Heart right ventricle (tissue), 16 donors: ENCODE measurements at regions of chr18 and their contacts with region 1.

Region 1: DNA sequence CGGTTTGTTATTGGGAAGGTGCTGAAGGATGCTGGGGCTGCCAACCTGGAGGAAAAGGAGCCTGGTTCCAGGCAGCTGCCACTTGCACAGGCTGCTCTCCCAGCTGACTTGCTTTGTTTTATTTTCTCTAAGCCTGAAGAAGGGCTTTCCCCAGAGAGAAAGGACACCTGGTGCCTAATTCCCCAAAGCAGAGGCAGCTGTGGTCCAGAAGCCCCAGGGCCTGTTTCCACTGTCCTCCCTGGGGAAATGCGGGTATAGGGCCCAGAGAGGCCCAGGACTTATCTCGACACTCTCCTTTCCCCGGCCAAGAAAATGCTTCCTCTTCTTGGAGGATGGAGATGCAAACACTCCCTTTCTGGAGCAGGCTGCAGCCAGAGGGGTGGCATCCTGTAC is 30.1 kb downstream of the INO80C start:
- DNase-seq: no peak
- ATAC-seq: peak in 3 of 8 donors; percentile 6 to 12 (median 10)
- H3K4me3 ChIP-seq: no peak overlapping the region
- H3K27ac ChIP-seq: peak overlapping the region in 9 of 10 donors; percentile 6 to 72 (median 45)
- H3K4me1 ChIP-seq: peaks cover 0 to 49% (median 21%) of the 10 kb centered on the region in 9 donors
- H3K27me3 ChIP-seq: no peaks in the 10 kb centered on the region
- CTCF ChIP-seq: no peak

Region 2: DNA sequence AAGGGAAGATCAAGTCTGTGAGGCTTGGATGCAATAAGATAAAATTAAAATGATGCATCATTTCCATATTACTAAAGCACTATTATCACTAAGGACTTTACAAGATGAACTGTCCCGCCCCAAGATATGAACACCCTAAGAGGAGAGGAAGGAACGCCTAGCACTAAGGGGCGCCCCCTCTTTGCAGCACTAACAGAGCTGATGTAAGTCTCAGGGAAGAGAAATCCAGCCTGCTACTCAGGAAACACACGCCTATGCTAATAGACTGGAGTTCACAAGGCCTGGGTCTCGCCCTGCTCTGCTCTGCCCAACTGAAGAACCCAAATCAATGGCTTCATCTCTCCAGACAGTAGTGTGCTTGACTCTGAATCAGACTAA is 24.1 kb after region 1 on chr18:
- intact Hi-C with region 1: loop called in 2 of 10 experiments (anchors 2 to 5 kb)
- DNase-seq: no peak
- ATAC-seq: peak in 6 of 8 donors; percentile 45 to 72 (median 64)
- H3K4me3 ChIP-seq: no peak overlapping the region
- H3K27ac ChIP-seq: peak overlapping the region in 4 of 10 donors; percentile 24 to 69 (median 46)
- H3K4me1 ChIP-seq: peaks cover 0 to 41% (median 26%) of the 10 kb centered on the region in 9 donors
- H3K27me3 ChIP-seq: no peaks in the 10 kb centered on the region
- CTCF ChIP-seq: no peak

Region 3: GRCh38 chr18:35511428-35511827 is 43.8 kb after region 1 on chr18:
- intact Hi-C with region 1: no loop called
- DNase-seq: no peak
- ATAC-seq: no peak
- H3K4me3 ChIP-seq: no peak overlapping the region
- H3K27ac ChIP-seq: no peak overlapping the region
- H3K4me1 ChIP-seq: peaks cover 0 to 35% (median 13%) of the 10 kb centered on the region in 9 donors
- H3K27me3 ChIP-seq: no peaks in the 10 kb centered on the region
- CTCF ChIP-seq: no peak

Region 4: DNA sequence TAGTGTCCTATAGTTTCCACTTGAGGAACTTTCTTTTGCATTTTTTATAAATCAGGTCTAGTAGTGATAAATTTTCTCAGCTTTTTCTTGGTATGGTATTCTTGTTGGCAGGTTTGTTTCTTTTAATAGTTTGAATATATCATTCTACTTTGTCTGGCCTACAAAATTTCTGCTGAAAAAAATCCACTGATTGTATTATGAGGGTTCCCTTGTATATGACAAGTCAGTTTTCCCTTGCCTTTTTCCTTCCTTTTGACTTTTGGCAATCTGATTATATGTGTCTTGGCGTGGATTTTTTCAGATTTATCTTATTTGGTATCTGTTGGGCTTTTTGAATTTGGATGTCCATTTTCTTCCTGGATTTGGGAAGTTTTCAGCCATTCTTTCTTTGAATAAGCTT is 761.6 kb after region 1 on chr18:
- intact Hi-C with region 1: no loop called
- DNase-seq: no peak
- ATAC-seq: no peak
- H3K4me3 ChIP-seq: no peak overlapping the region
- H3K27ac ChIP-seq: no peak overlapping the region
- H3K4me1 ChIP-seq: no peaks in the 10 kb centered on the region
- H3K27me3 ChIP-seq: no peaks in the 10 kb centered on the region
- CTCF ChIP-seq: no peak